CD8-positive, alpha-beta T cell (primary cell): ENCODE measurements at regions of chr6 and their contacts with region 1.

Region 1: GRCh38 chr6:52162940-52163908 is 23.0 kb upstream of the IL17A start:
- DNase-seq: peak in 2 of 9 experiments; percentile 57 to 66
- ATAC-seq: peak; percentile 69
- H3K4me3 ChIP-seq: no peak overlapping the region
- H3K4me3 Mint-ChIP-seq: no peak overlapping the region
- H3K27ac ChIP-seq: no peak overlapping the region
- H3K27ac Mint-ChIP-seq: no peak overlapping the region
- H3K4me1 ChIP-seq: no peaks in the 10 kb centered on the region
- H3K4me1 Mint-ChIP-seq: no peaks in the 10 kb centered on the region
- H3K27me3 ChIP-seq: peaks cover 0 to 2% of the 10 kb centered on the region in 2 experiments
- H3K27me3 Mint-ChIP-seq: peaks cover 15% of the 10 kb centered on the region
- CTCF ChIP-seq: peak; percentile 67

Region 2: DNA sequence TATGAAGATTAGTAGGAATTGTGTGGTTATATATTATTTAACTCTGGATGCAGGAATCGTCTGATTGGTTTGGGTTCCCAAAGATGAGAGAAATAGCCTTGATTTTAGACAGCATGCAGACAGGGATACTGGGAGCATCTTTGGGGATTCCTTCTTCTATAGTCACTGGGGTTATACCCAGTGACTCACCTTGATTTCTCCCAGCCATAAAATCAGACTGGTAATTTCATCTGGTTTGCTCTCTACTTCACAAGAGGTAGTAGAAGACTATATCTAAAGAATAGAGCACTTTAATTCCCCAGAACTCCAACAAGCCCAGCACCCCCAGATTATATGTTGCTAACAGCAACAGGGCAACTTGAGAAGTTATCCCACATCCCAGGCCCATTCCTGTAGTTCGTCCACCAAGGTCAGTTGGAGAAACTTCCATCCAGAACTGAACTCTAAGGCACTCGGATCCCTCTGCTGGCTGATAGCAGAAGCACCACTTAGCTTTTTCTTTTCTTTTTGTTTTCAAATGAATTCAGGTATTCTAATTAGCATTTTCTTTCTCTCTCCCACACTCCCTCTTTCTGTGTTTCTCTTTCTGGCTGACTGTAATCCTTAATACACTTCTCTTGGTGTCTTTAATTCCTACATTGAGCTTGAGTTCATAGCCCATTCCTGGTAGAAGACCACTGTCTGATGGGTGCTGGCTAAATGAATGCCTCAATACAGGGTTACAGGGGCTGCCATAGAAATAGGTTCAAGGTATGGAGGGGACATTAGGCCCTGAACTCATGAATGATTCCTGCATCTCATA is 236.5 kb after region 1 on chr6:
- CTCF ChIA-PET with region 1: no interaction called
- POLR2A ChIA-PET with region 1: no interaction called
- intact Hi-C with region 1: loop called (anchors 5 to 10 kb)
- DNase-seq: peak in 6 of 9 experiments; percentile 25 to 76 (median 52)
- ATAC-seq: peak; percentile 52
- H3K4me3 ChIP-seq: no peak overlapping the region
- H3K4me3 Mint-ChIP-seq: peak overlapping the region; percentile 53
- H3K27ac ChIP-seq: peak overlapping the region; percentile 45 to 75
- H3K27ac Mint-ChIP-seq: peak overlapping the region; percentile 93
- H3K4me1 ChIP-seq: peaks cover 71% of the 10 kb centered on the region
- H3K4me1 Mint-ChIP-seq: peaks cover 82% of the 10 kb centered on the region
- H3K27me3 ChIP-seq: no peaks in the 10 kb centered on the region
- H3K27me3 Mint-ChIP-seq: no peaks in the 10 kb centered on the region
- CTCF ChIP-seq: peak; percentile 96

Region 3: DNA sequence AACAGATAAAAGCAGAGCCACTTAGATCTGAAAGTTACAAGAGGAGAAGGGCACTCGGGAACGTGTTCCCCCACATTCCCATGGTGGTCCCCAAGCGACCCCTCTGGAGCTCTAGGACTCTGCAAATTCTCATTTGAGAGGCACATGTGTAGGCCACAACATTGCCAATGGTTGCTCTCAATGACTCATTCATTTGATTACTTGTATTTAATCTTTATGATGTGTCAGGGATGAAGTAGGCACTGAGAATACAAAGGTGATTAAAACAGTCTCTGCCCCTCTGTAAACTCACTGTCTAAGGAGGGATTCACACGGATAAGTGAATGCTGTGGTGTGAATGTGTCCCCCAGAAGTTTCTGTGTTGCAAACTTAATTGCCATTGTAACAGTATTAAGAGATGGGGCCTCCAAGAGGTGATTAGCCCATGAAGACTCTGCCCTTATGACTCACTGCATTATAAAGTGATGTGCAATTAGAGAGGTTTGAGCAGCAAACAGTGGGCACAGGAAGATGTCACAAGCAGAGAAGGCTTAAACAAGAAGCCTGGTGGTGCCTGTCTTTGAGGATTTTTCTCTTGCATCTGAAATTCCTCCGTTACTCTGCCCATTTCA is 447.6 kb after region 1 on chr6:
- CTCF ChIA-PET with region 1: no interaction called
- POLR2A ChIA-PET with region 1: no interaction called
- intact Hi-C with region 1: no loop called
- DNase-seq: no peak
- ATAC-seq: no peak
- H3K4me3 ChIP-seq: no peak overlapping the region
- H3K4me3 Mint-ChIP-seq: no peak overlapping the region
- H3K27ac ChIP-seq: no peak overlapping the region
- H3K27ac Mint-ChIP-seq: no peak overlapping the region
- H3K4me1 ChIP-seq: no peaks in the 10 kb centered on the region
- H3K4me1 Mint-ChIP-seq: no peaks in the 10 kb centered on the region
- H3K27me3 ChIP-seq: peaks cover 0 to 2% of the 10 kb centered on the region in 2 experiments
- H3K27me3 Mint-ChIP-seq: peaks cover 11% of the 10 kb centered on the region
- CTCF ChIP-seq: no peak